ENCODE measurements at regions of chr12 and their contacts with region 1.

Region 1: GRCh38 chr12:31682136-31682962 is 22.9 kb downstream of the ETFBKMT start:
- DNase-seq: peak; percentile 37
- ATAC-seq: peak; percentile 79
- H3K4me3 Mint-ChIP-seq: peak overlapping the region; percentile 64
- H3K27ac Mint-ChIP-seq: peak overlapping the region; percentile 91
- H3K4me1 Mint-ChIP-seq: peaks cover 38% of the 10 kb centered on the region
- H3K27me3 Mint-ChIP-seq: no peaks in the 10 kb centered on the region
- CTCF ChIP-seq: peak; percentile 13

Region 2: DNA sequence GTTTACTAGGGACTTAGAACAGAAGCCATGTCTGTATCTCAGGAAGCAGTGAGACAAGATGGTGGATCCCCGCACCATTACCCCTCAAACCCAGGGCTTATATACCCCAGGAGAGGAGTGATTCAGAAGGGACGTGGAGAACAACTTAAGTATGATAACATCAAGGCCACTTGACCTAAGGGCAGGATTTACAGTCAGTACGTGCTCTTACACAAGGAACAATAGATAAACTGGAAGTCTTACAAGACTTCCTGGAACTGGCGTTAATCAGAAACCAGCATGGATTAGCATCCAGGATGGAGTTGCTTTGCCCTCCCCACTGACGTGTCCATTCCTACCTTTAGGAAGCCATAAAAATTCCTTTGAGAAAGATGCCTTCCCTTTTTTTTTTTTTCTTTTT is 31.4 kb before region 1 on chr12:
- CTCF ChIA-PET with region 1: interaction called, 15 read pairs
- POLR2A ChIA-PET with region 1: interaction called, 4 read pairs
- intact Hi-C with region 1: no loop called
- DNase-seq: no peak
- ATAC-seq: no peak
- H3K4me3 Mint-ChIP-seq: no peak overlapping the region
- H3K27ac Mint-ChIP-seq: no peak overlapping the region
- H3K4me1 Mint-ChIP-seq: peaks cover 26% of the 10 kb centered on the region
- H3K27me3 Mint-ChIP-seq: no peaks in the 10 kb centered on the region
- CTCF ChIP-seq: no peak

Region 3: DNA sequence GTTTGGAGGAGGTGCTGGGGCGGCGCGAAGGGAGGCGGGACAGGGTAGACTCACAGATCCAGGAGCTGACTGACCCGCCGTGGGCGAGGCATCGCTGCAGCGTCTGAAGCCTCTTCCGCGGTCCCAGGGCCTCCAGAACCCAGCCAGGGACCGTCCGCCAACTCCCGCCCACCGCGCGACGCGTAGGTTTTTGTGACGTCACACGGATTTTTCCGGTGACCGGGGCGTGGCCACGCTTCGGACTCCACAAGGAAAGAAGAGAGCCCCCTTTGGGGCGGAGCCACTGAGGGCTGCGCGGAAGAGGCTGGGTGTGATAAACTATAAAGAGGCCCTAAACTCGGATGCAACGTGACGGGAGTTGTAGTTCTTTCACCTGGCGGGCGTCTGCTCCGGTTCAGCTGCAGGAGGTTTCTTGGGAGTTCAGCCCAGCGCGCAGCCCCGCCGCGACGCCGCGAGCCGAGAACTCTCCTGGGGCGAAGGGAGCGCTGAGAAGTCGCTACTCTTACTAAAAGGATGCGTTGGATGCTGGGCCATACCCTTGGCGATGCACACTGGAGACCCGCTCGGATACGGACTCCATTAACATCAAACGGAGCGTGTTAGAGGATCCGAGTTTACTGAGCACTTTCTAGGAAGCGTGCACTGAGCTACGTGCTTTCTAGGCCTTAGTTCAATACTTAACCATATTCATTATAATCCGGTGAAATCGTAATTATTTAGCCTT is 46.7 kb after region 1 on chr12 and contains the start of gene AMN1:
- CTCF ChIA-PET with region 1: interaction called, 9 read pairs
- POLR2A ChIA-PET with region 1: interaction called, 52 read pairs
- intact Hi-C with region 1: loop called (anchors 1 kb)
- DNase-seq: peak; percentile 100
- ATAC-seq: peak; percentile 90
- H3K4me3 Mint-ChIP-seq: peak within 1 kb of the TSS; percentile 92
- H3K27ac Mint-ChIP-seq: peak within 1 kb of the TSS; percentile 98
- H3K4me1 Mint-ChIP-seq: peaks cover 74% of the 10 kb centered on the region
- H3K27me3 Mint-ChIP-seq: no peaks in the 10 kb centered on the region
- CTCF ChIP-seq: no peak
- total RNA-seq, gene AMN1: 13.7 and 15.5 TPM in 2 replicates

Region 4: DNA sequence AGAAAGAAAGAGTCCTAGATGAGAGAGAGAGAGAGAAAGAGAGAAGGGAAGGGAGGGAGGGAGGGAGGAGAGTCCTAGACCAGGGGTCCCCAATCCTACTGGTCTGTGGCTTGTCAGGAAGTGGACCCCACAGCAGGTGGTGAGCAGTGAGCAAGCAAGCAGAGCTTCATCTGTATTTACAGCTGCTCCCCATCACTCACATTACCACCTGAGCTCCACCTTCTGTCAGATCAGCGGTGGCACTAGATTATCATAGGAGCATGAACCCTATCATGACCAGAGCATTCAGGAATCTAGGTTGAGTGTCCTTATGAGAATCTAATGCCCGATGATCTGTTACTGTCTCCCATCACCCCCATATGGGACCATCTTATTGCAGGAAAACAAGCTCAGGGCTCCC is 85.7 kb after region 1 on chr12:
- CTCF ChIA-PET with region 1: no interaction called
- POLR2A ChIA-PET with region 1: interaction called, 4 read pairs
- intact Hi-C with region 1: loop called (anchors 5 kb)
- DNase-seq: no peak
- ATAC-seq: no peak
- H3K4me3 Mint-ChIP-seq: no peak overlapping the region
- H3K27ac Mint-ChIP-seq: peak overlapping the region; percentile 35
- H3K4me1 Mint-ChIP-seq: peaks cover 30% of the 10 kb centered on the region
- H3K27me3 Mint-ChIP-seq: no peaks in the 10 kb centered on the region
- CTCF ChIP-seq: no peak

Region 5: DNA sequence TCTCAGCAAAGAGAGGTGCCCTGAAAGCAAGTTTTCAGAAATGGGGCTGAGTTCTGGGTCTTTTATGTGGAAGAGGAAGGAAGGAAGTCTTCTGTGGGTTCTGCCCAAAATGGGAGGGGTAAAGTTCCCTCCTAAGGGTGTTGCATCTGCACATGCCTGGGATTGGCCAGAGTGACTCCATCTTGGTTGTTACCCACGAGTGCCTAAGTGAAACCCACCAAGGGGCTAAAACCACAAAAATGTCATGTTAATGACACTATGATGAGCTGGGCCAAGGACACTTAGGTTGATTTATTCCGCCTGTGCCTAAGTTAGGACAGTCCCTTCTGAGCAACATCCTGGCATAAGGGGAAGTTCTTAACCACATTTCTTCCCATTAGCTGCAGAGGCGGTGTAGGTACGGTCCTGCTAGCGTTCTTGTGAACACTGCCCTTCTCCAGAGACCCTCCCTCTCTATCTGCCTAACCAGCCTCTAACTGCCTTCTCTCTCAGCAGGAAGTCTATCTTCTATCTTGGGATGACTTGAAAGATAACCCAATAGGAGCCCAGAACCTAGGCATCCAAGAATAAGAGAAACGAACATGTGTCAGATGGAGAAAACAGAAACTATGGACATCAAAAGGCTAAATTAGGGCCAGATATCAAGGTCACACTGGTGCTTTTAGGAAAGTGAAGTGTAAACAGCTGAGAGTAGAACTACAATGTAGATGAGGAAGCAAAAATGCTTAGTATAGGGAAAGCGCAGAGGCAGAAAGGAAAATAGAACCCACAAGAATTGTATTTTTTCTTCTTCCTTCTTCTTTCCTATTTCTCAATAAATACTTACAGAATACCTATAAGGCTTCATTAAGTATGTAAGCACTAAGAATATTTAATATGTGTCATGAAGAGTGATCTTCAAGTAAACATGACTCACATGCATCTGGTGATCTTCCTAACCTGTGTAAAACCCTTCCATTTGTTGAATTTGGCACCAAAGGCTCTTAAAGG is 150.7 kb after region 1 on chr12:
- CTCF ChIA-PET with region 1: no interaction called
- POLR2A ChIA-PET with region 1: interaction called, 13 read pairs
- intact Hi-C with region 1: loop called (anchors 1 kb)
- DNase-seq: peak; percentile 36
- ATAC-seq: peak; percentile 84
- H3K4me3 Mint-ChIP-seq: peak overlapping the region; percentile 59
- H3K27ac Mint-ChIP-seq: peak overlapping the region; percentile 94
- H3K4me1 Mint-ChIP-seq: peaks cover 76% of the 10 kb centered on the region
- H3K27me3 Mint-ChIP-seq: no peaks in the 10 kb centered on the region
- CTCF ChIP-seq: no peak

Region 6: DNA sequence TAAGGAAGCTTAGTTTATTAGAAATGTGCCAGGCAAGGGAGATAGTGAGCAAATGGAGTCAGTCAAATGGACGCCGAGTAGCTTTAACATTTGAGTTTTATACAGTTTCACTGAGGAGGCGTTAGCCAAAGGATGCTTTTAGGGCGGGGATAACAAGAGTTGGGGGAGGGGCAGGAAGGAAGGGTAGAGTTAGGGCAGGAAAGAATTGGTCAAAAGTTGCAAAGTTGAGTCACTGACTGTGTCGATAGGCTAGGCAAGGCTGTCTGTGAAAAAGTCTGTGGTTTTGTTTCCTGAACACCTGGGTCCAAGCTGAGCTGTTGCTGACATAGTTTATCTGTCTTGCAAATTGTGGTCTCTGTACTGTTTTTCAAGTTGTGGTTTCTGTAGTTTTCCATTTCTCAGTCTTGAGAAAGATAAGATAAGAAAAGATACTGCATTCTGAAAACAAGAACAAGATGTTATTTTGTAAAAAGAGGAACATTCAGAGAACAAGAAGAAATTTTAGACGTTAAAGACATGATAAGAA is 214.2 kb after region 1 on chr12:
- CTCF ChIA-PET with region 1: no interaction called
- POLR2A ChIA-PET with region 1: interaction called, 12 read pairs
- intact Hi-C with region 1: loop called (anchors 1 kb)
- DNase-seq: peak; percentile 58
- ATAC-seq: peak; percentile 93
- H3K4me3 Mint-ChIP-seq: peak overlapping the region; percentile 73
- H3K27ac Mint-ChIP-seq: peak overlapping the region; percentile 96
- H3K4me1 Mint-ChIP-seq: peaks cover 69% of the 10 kb centered on the region
- H3K27me3 Mint-ChIP-seq: no peaks in the 10 kb centered on the region
- CTCF ChIP-seq: no peak

Region 7: GRCh38 chr12:32139064-32139421 is 456.7 kb after region 1 on chr12:
- CTCF ChIA-PET with region 1: interaction called, 3 read pairs
- POLR2A ChIA-PET with region 1: interaction called, 4 read pairs
- intact Hi-C with region 1: loop called (anchors 10 kb)
- DNase-seq: peak; percentile 27
- ATAC-seq: peak; percentile 83
- H3K4me3 Mint-ChIP-seq: peak overlapping the region; percentile 79
- H3K27ac Mint-ChIP-seq: peak overlapping the region; percentile 96
- H3K4me1 Mint-ChIP-seq: peaks cover 74% of the 10 kb centered on the region
- H3K27me3 Mint-ChIP-seq: no peaks in the 10 kb centered on the region
- CTCF ChIP-seq: no peak

Region 8: GRCh38 chr12:33304176-33304575 is 1621.8 kb after region 1 on chr12:
- CTCF ChIA-PET with region 1: no interaction called
- POLR2A ChIA-PET with region 1: no interaction called
- intact Hi-C with region 1: no loop called
- DNase-seq: no peak
- ATAC-seq: no peak
- H3K4me3 Mint-ChIP-seq: no peak overlapping the region
- H3K27ac Mint-ChIP-seq: no peak overlapping the region
- H3K4me1 Mint-ChIP-seq: no peaks in the 10 kb centered on the region
- H3K27me3 Mint-ChIP-seq: no peaks in the 10 kb centered on the region
- CTCF ChIP-seq: no peak